ENCODE measurements at regions of chr6 and their contacts with region 1.

Region 1: DNA sequence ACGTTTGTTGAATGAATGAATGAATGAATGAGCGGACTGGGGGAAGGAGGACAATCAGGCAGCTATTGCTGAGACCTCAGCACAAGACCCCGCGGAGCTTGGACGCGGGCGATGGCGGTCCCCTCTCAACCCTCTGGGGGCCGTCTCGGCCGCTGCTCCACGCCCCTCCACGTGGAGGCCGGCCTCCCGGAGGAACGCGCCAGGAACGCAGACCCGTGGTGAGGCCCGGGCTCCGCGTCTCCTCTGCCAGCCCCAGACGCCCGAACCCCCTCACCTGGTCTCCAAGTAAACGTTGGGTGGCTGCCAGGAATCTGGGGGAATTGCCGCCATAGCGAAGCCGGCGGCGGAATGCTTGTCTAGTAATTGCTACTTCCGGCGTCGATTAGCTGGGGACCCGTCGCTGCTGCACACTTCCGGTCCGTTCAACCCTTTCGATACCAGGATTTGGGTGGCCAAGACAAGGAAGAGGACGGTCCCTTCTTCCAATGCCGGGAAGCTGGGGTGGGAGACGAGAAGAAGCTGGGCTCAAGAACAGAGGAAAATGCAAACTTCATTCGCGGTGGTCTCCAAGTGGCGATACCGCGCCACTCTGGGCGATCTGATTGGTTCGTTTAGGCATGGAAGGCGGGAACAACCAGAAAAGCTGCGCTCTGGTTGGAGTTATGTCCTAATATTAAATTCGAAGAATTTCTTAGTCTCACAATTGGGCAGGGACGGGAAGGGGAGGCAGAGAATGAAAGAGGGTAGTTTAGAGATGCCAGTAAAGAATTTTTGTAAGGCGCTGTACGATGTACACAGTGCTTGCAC is at the start of gene PPIL1:
- DNase-seq: peak in 1 of 2 experiments; percentile 82
- H3K4me3 ChIP-seq: peak within 1 kb of the TSS; percentile 83 to 91 (median 87)
- H3K27ac ChIP-seq: peak within 1 kb of the TSS; percentile 93
- H3K4me1 ChIP-seq: peaks cover 0 to 4% (median 1%) of the 10 kb centered on the region in 4 experiments; a peak in 3 of 7 replicates
- H3K27me3 ChIP-seq: no peaks in the 10 kb centered on the region
- CTCF ChIP-seq: no peak
- EP300 ChIP-seq: no peak
- POLR2A ChIP-seq: peak; percentile 77 to 81; a peak in 2 of 3 replicates
- RAD21 ChIP-seq: no peak
- total RNA-seq, gene PPIL1: 85.8 and 86.5 TPM in 2 replicates

Region 2: GRCh38 chr6:36752187-36752885 is 122.3 kb before region 1 on chr6:
- CTCF ChIA-PET with region 1: no interaction called
- POLR2A ChIA-PET with region 1: no interaction called
- DNase-seq: no peak
- H3K4me3 ChIP-seq: no peak overlapping the region
- H3K27ac ChIP-seq: no peak overlapping the region
- H3K4me1 ChIP-seq: peaks cover 0 to 2% (median 0%) of the 10 kb centered on the region in 4 experiments; a peak in 2 of 7 replicates
- H3K27me3 ChIP-seq: no peaks in the 10 kb centered on the region; a peak in 1 of 7 replicates
- CTCF ChIP-seq: no peak
- EP300 ChIP-seq: no peak
- POLR2A ChIP-seq: no peak
- RAD21 ChIP-seq: no peak

Region 3: DNA sequence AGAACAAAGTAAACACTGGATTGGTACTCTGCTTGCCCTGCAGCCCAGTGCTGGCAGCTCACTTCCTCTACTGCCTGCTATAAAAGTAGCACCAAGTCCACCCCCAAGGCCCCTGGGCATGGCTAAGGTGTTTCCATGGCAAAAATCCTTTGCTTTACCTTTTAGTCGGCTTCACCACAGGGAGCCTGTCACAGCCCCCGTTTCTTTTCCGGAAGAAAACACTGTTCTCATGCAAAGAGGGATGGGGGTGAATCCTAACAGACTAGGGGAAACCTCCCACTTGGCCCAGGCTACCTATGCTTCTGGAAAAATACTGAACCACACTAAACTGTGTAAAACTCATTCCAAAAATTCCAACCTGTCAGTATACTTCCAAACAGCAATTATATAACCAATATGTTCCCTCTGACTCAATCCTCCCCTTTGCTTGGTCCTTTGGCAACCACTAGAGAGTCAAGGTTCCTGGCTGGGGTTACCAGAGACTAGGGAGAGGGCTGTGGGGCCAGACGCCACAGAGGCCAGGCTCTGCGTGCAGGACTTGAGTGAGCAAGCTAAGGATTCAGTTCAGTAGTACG is 16.2 kb before region 1 on chr6:
- CTCF ChIA-PET with region 1: interaction called, 77 read pairs
- POLR2A ChIA-PET with region 1: interaction called, 32 read pairs
- DNase-seq: peak in 1 of 2 experiments; percentile 77
- H3K4me3 ChIP-seq: peak overlapping the region in 1 of 4 experiments; percentile 17; a peak in 2 of 8 replicates
- H3K27ac ChIP-seq: peak overlapping the region; percentile 75
- H3K4me1 ChIP-seq: peaks cover 2 to 11% (median 3%) of the 10 kb centered on the region in 4 experiments; a peak in 5 of 7 replicates
- H3K27me3 ChIP-seq: no peaks in the 10 kb centered on the region
- CTCF ChIP-seq: no peak
- EP300 ChIP-seq: peak in 1 of 2 experiments; percentile 60; a peak in 1 of 3 replicates
- POLR2A ChIP-seq: no peak
- RAD21 ChIP-seq: no peak

Region 4: GRCh38 chr6:36885461-36886401 is 11.1 kb after region 1 on chr6 and contains the start of gene C6orf89:
- CTCF ChIA-PET with region 1: interaction called, 51 read pairs
- POLR2A ChIA-PET with region 1: interaction called, 35 read pairs
- DNase-seq: peak; percentile 95 to 97
- H3K4me3 ChIP-seq: peak within 1 kb of the TSS; percentile 47 to 81 (median 70)
- H3K27ac ChIP-seq: peak within 1 kb of the TSS; percentile 24; the same call in 1 of the 2 replicates
- H3K4me1 ChIP-seq: no peaks in the 10 kb centered on the region; a peak in 1 of 7 replicates
- H3K27me3 ChIP-seq: no peaks in the 10 kb centered on the region
- CTCF ChIP-seq: peak; percentile 72 to 87 (median 82)
- EP300 ChIP-seq: 0 out of 3 replicates have a peak, but pooled peaks of 1 of the 2 experiments have one; percentile 10
- POLR2A ChIP-seq: no peak
- RAD21 ChIP-seq: peak; percentile 32 to 47; a peak in 3 of 4 replicates
- total RNA-seq, gene C6orf89: 11.6 and 12.3 TPM in 2 replicates